ENCODE measurements at regions of chr3 and their contacts with region 1.

Region 1: GRCh38 chr3:41608347-41608746 is 353.6 kb downstream of the ULK4 start:
- DNase-seq: no peak
- H3K4me3 Mint-ChIP-seq: no peak overlapping the region
- H3K27ac Mint-ChIP-seq: peak overlapping the region; percentile 52
- H3K4me1 Mint-ChIP-seq: peaks cover 12% of the 10 kb centered on the region
- H3K27me3 Mint-ChIP-seq: no peaks in the 10 kb centered on the region

Region 2: DNA sequence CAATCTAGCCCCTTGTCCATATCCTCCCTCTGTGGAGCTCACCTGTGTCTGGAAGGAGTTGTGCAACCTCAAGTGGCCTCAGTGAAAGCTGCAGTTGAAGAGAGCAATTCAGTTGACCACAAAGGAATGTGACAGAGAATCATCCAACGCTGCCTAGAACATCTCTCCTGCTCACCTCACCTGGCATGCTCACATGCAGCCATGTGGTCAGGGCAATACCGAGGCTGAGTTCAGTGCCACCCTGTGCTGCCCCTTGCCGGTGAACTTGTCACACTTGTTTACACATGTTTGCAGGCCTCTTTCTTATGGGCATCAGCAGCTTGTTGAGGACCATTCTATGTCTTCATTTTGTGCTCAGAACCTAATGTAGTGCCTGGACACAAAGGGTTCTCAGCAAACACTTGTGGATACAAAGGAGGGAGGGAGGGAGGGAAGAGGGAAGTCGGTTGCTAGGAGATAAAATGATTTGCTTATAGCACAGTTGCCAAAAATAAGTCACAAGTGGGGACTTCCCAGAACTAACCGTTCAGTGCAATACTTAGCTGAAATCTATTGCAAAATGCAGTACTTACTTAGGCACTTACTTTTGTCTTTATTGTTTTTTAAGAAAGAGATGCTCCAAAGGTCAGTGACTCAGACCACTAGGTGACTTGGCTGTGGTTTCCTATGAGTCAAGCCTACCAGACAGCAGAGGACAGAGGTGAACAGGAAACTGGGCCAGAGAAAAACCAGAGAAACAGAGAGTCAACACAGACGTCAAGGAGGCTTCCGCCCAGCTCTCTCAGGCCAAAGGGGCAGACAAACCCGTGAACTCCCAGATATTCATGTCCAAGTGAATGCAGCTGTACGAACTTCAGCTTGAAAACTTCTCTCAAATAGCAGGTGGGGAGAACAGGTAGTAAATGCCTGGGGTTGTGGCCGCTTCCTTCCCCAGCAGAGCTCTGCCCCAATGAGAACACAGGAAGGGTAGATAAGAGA is 636.9 kb before region 1 on chr3:
- CTCF ChIA-PET with region 1: no interaction called
- intact Hi-C with region 1: loop called (anchors 2 kb)
- DNase-seq: peak; percentile 48
- H3K4me3 Mint-ChIP-seq: no peak overlapping the region
- H3K27ac Mint-ChIP-seq: peak overlapping the region; percentile 10
- H3K4me1 Mint-ChIP-seq: peaks cover 13% of the 10 kb centered on the region
- H3K27me3 Mint-ChIP-seq: peaks cover 26% of the 10 kb centered on the region

Region 3: GRCh38 chr3:41836360-41837134 is 228.2 kb after region 1 on chr3:
- CTCF ChIA-PET with region 1: no interaction called
- intact Hi-C with region 1: loop called (anchors 1 kb)
- DNase-seq: peak; percentile 9
- H3K4me3 Mint-ChIP-seq: no peak overlapping the region
- H3K27ac Mint-ChIP-seq: no peak overlapping the region
- H3K4me1 Mint-ChIP-seq: peaks cover 16% of the 10 kb centered on the region
- H3K27me3 Mint-ChIP-seq: no peaks in the 10 kb centered on the region

Region 4: GRCh38 chr3:42090973-42091731 is 482.8 kb after region 1 on chr3 and contains the start of gene TRAK1:
- CTCF ChIA-PET with region 1: no interaction called
- intact Hi-C with region 1: loop called (anchors 5 kb)
- DNase-seq: no peak
- H3K4me3 Mint-ChIP-seq: no peak within 1 kb of the TSS
- H3K27ac Mint-ChIP-seq: no peak within 1 kb of the TSS
- H3K4me1 Mint-ChIP-seq: peaks cover 51% of the 10 kb centered on the region
- H3K27me3 Mint-ChIP-seq: no peaks in the 10 kb centered on the region
- total RNA-seq, gene TRAK1: 18.3 to 19.1 TPM

Measured in activated naive CD4-positive, alpha-beta T cell treated with anti-CD3 and anti-CD28 coated beads for 36 hours (primary cell).